Activated CD4-positive, alpha-beta T cell treated with anti-CD3 and anti-CD28 coated beads for 36 hours (primary cell): ENCODE measurements at regions of chr14 and their contacts with region 1.

Region 1: DNA sequence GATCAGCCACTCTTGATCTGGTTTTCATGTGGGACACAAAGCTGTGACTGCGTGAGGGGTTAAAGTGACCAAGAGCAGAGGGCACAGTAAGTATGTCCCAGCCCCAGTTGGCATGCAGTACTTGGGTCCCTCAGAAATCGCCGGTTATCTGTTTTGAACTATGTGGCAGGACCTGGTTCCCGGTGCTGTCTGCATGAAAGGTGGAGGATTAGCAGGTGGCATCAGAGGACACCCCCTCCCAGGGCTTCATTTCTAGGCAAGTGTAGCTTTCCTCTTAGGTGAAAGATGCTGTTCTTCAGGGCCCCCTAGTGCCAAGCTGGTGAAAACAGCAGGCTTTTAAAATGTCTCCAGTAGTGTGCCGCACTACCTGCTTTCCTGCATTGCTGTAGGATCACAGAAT is 57.1 kb downstream of the ATG14 start:
- DNase-seq: peak; percentile 75
- ATAC-seq: peak; percentile 93
- H3K4me3 Mint-ChIP-seq: no peak overlapping the region
- H3K27ac Mint-ChIP-seq: peak overlapping the region; percentile 87
- H3K4me1 Mint-ChIP-seq: peaks cover 23% of the 10 kb centered on the region
- H3K27me3 Mint-ChIP-seq: no peaks in the 10 kb centered on the region

Region 2: DNA sequence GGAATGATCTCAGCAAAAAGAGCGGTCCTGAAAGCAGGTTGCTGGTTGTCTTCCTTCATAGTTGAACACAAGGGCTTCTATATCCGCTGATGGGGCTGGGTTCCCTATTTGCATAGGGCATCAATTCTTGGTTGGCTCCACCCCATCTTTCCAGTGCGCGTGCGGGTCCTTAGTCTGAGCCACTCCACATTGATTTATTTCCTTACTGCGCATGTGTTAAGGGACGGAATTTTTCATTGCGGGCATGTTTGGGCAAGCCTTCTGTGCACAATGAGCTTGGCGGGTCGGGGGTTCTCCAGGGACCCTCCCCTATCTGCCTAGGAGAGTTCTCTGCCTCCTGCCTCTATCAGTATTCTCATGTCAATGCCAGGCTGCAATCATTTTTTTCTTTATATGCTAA is 141.9 kb before region 1 on chr14:
- CTCF ChIA-PET with region 1: interaction called, 12 read pairs
- POLR2A ChIA-PET with region 1: no interaction called
- intact Hi-C with region 1: loop called (anchors 1 kb)
- DNase-seq: no peak
- ATAC-seq: no peak
- H3K4me3 Mint-ChIP-seq: no peak overlapping the region
- H3K27ac Mint-ChIP-seq: no peak overlapping the region
- H3K4me1 Mint-ChIP-seq: peaks cover 4% of the 10 kb centered on the region
- H3K27me3 Mint-ChIP-seq: no peaks in the 10 kb centered on the region

Region 3: DNA sequence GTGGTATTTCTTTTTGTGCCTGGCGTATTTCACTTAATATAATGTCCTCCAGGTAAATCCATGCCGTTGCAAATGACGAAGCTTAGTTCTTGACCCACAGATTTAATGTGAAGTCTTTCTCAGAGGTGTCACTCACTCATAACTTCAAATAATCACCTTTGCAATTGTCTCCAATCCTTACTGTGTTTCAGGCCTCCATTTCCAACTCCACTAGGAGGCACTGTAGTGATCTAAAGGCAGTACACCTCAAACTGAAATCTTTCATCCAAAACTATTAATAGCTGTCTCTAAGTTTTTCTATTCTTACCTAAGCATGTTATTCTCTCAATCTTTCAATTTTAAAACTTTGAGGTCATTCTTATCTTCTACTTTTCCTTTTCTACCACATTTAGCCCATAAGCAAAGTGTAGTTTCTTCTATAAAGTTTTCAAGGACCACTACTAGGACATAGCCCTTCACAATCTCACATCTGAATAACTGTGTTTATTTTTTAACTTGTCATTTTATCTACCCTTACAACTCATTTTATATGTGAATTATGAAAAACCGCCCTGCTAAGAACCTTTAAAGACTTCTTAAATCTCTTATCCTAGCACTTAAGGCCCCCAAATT is 108.7 kb before region 1 on chr14:
- CTCF ChIA-PET with region 1: interaction called, 10 read pairs
- POLR2A ChIA-PET with region 1: no interaction called
- intact Hi-C with region 1: loop called (anchors 1 kb)
- DNase-seq: peak; percentile 37
- ATAC-seq: peak; percentile 65
- H3K4me3 Mint-ChIP-seq: no peak overlapping the region
- H3K27ac Mint-ChIP-seq: no peak overlapping the region
- H3K4me1 Mint-ChIP-seq: no peaks in the 10 kb centered on the region
- H3K27me3 Mint-ChIP-seq: peaks cover 4% of the 10 kb centered on the region

Region 4: DNA sequence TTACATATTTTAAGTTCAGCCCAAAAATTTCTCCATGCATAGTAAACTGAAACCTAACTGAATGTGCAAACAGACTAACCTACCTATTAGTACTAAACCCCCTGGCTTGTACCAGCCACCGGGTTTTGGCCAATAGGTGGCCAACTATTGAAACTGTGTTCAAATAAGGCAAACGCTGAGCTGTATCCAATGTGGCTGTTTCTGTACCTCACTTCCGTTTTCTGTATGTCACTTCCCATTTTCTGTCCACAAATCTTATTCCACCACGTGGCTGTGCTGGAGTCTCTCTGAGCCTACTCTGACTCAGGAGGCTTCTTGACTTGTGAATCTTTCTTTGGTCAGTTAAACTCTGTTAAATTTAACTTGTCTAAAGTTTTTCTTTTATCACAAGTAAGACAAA is 89.3 kb before region 1 on chr14:
- CTCF ChIA-PET with region 1: interaction called, 96 read pairs
- POLR2A ChIA-PET with region 1: no interaction called
- intact Hi-C with region 1: no loop called
- DNase-seq: peak; percentile 30
- ATAC-seq: peak; percentile 80
- H3K4me3 Mint-ChIP-seq: no peak overlapping the region
- H3K27ac Mint-ChIP-seq: no peak overlapping the region
- H3K4me1 Mint-ChIP-seq: no peaks in the 10 kb centered on the region
- H3K27me3 Mint-ChIP-seq: no peaks in the 10 kb centered on the region

Region 5: GRCh38 chr14:55333711-55334485 is 20.6 kb before region 1 on chr14:
- CTCF ChIA-PET with region 1: interaction called, 13 read pairs
- POLR2A ChIA-PET with region 1: interaction called, 6 read pairs
- intact Hi-C with region 1: loop called (anchors 1 to 2 kb)
- DNase-seq: no peak
- ATAC-seq: peak; percentile 31
- H3K4me3 Mint-ChIP-seq: peak overlapping the region; percentile 16
- H3K27ac Mint-ChIP-seq: peak overlapping the region; percentile 69
- H3K4me1 Mint-ChIP-seq: peaks cover 85% of the 10 kb centered on the region
- H3K27me3 Mint-ChIP-seq: no peaks in the 10 kb centered on the region

Region 6: GRCh38 chr14:55366271-55366670 is 11.8 kb after region 1 on chr14:
- CTCF ChIA-PET with region 1: interaction called, 11 read pairs
- POLR2A ChIA-PET with region 1: no interaction called
- intact Hi-C with region 1: no loop called
- DNase-seq: no peak
- ATAC-seq: no peak
- H3K4me3 Mint-ChIP-seq: no peak overlapping the region
- H3K27ac Mint-ChIP-seq: no peak overlapping the region
- H3K4me1 Mint-ChIP-seq: peaks cover 7% of the 10 kb centered on the region
- H3K27me3 Mint-ChIP-seq: no peaks in the 10 kb centered on the region